ENCODE measurements at regions of chr1 and their contacts with region 1.

Region 1: DNA sequence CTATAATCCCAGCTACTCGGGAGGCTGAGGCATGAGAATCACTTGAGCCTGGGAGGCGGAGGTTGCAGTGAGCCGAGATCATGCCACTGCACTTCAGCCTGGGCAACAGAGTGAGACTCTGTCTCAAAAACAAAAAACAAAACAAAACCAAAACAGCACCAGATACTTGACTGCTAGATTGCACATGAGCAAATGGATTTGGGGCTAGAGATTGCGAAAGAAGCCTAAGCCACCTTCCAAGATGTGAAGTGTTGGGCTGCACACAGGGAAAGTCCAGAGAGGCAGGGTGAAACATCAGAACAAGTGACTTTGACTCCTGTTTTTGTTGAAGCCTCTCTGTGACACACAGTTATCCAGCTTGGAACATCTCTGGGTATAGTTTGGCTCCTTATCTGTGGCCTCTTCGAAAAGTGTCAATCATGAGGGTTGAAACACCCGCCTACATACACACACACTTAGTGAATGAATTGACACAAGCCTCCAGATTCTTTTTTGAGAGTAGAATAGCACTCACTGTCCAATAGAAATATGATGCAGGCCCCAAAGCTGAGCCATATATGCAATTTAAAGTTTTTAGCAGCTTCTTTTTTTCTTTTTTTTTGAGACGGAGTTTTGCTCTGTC is 34.2 kb upstream of the GPR137B start:
- DNase-seq: no peak
- H3K4me3 ChIP-seq: no peak overlapping the region
- H3K27ac ChIP-seq: no peak overlapping the region
- H3K4me1 ChIP-seq: peaks cover 0 to 5% of the 10 kb centered on the region in 2 experiments; a peak in 1 of 4 replicates
- H3K27me3 ChIP-seq: no peaks in the 10 kb centered on the region
- CTCF ChIP-seq: no peak
- EP300 ChIP-seq: no peak
- RAD21 ChIP-seq: no peak

Region 2: DNA sequence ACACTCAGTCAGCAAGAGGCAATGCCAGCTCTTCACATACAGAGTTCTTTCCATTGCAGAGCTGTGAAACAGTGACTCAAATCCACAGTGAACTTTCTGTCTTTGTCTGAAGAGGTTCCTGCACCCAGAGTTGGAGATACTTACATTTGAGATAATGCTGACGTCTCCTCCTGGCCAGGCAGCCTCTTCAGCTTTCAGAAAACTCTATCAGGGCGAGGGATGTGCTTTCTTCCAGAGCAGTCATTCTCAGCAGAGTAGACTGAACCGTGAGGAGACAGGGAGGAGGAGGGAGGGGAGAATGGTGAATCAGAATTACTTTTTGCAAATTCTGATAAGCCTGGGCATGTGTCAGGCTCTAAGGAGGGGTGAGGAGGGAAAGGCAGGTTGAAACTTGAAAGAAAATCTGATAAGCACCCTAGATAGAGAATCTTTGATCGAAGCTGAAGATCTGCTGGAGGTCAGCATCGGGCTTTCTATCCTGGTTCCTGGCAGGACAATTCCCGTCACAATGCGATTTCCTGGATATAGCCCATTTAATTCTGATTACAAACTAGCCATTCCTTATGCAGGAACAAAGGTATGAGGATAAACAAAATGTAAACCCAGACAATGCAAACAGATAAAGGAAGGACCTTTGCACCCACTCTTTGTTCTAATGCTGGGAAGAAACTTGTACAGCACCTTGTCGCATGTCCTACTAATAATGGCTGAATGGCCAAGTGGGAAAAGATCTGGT is 24.3 kb before region 1 on chr1:
- CTCF ChIA-PET with region 1: no interaction called
- POLR2A ChIA-PET with region 1: no interaction called
- DNase-seq: no peak
- H3K4me3 ChIP-seq: 0 out of 4 replicates have a peak overlapping the region, but pooled peaks of 1 of the 2 experiments have one; percentile 20
- H3K27ac ChIP-seq: no peak overlapping the region
- H3K4me1 ChIP-seq: peaks cover 4 to 8% of the 10 kb centered on the region in 2 experiments; a peak in 1 of 4 replicates
- H3K27me3 ChIP-seq: no peaks in the 10 kb centered on the region
- CTCF ChIP-seq: no peak
- EP300 ChIP-seq: no peak
- RAD21 ChIP-seq: no peak

Region 3: DNA sequence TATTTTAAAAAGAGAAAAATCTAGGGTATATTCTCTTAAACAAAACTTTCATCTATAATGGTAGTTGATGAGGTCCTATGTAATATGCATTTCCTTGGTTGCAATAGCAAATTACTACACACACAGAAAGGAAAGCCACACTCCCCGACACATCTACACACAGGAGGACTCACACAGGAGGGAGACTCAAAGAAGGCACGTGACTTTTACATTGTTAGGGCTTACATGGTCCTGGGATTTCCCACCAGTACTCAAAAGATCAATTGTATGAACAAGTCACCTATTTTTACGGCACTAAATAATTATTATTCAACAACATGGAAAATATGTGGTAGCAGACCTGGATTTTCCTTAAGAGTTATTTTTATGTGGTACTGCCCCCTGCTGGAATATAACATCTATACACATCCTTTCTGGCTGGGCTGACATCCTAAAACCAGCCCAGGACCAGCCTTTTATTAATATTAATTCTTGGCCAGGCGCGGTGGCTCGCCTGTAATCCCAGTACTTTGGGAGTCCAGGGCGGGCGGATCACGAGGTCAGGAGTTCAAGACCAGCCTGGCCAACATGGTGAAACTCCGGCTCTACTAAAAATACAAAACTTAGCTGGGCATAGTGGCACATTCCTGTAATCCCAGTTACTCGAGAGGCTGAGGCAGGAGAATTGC is 381.7 kb after region 1 on chr1:
- CTCF ChIA-PET with region 1: interaction called, 34 read pairs
- POLR2A ChIA-PET with region 1: no interaction called
- DNase-seq: peak; percentile 79
- H3K4me3 ChIP-seq: no peak overlapping the region
- H3K27ac ChIP-seq: no peak overlapping the region
- H3K4me1 ChIP-seq: no peaks in the 10 kb centered on the region
- H3K27me3 ChIP-seq: no peaks in the 10 kb centered on the region
- CTCF ChIP-seq: peak; percentile 73
- EP300 ChIP-seq: no peak
- RAD21 ChIP-seq: peak; percentile 81

Measured in SK-N-SH (cell line).